Activated CD4-positive, alpha-beta T cell treated with anti-CD3 and anti-CD28 coated beads for 36 hours (primary cell): ENCODE measurements at regions of chr3 and their contacts with region 1.

Region 1: GRCh38 chr3:71423151-71423906 is 160.2 kb downstream of the FOXP1 start:
- DNase-seq: no peak
- ATAC-seq: no peak
- H3K4me3 Mint-ChIP-seq: no peak overlapping the region
- H3K27ac Mint-ChIP-seq: peak overlapping the region; percentile 92
- H3K4me1 Mint-ChIP-seq: peaks cover 94% of the 10 kb centered on the region
- H3K27me3 Mint-ChIP-seq: no peaks in the 10 kb centered on the region

Region 2: GRCh38 chr3:71160800-71161546 is 262.4 kb before region 1 on chr3:
- CTCF ChIA-PET with region 1: no interaction called
- POLR2A ChIA-PET with region 1: no interaction called
- intact Hi-C with region 1: no loop called
- DNase-seq: peak; percentile 22
- ATAC-seq: peak; percentile 64
- H3K4me3 Mint-ChIP-seq: no peak overlapping the region
- H3K27ac Mint-ChIP-seq: peak overlapping the region; percentile 77
- H3K4me1 Mint-ChIP-seq: peaks cover 71% of the 10 kb centered on the region
- H3K27me3 Mint-ChIP-seq: no peaks in the 10 kb centered on the region

Region 3: GRCh38 chr3:71247221-71247976 is 175.9 kb before region 1 on chr3:
- CTCF ChIA-PET with region 1: no interaction called
- POLR2A ChIA-PET with region 1: no interaction called
- intact Hi-C with region 1: no loop called
- DNase-seq: no peak
- ATAC-seq: peak; percentile 67
- H3K4me3 Mint-ChIP-seq: no peak overlapping the region
- H3K27ac Mint-ChIP-seq: no peak overlapping the region
- H3K4me1 Mint-ChIP-seq: peaks cover 74% of the 10 kb centered on the region
- H3K27me3 Mint-ChIP-seq: no peaks in the 10 kb centered on the region

Region 4: GRCh38 chr3:71380096-71380495 is 43.2 kb before region 1 on chr3:
- CTCF ChIA-PET with region 1: no interaction called
- POLR2A ChIA-PET with region 1: no interaction called
- intact Hi-C with region 1: loop called (anchors 5 kb)
- DNase-seq: no peak
- ATAC-seq: no peak
- H3K4me3 Mint-ChIP-seq: no peak overlapping the region
- H3K27ac Mint-ChIP-seq: peak overlapping the region; percentile 7
- H3K4me1 Mint-ChIP-seq: peaks cover 91% of the 10 kb centered on the region
- H3K27me3 Mint-ChIP-seq: no peaks in the 10 kb centered on the region

Region 5: GRCh38 chr3:71397046-71397445 is 26.3 kb before region 1 on chr3:
- CTCF ChIA-PET with region 1: interaction called, 10 read pairs
- POLR2A ChIA-PET with region 1: interaction called, 3 read pairs
- intact Hi-C with region 1: loop called (anchors 1 kb)
- DNase-seq: peak; percentile 36
- ATAC-seq: no peak
- H3K4me3 Mint-ChIP-seq: no peak overlapping the region
- H3K27ac Mint-ChIP-seq: no peak overlapping the region
- H3K4me1 Mint-ChIP-seq: peaks cover 83% of the 10 kb centered on the region
- H3K27me3 Mint-ChIP-seq: peaks cover 2% of the 10 kb centered on the region

Region 6: DNA sequence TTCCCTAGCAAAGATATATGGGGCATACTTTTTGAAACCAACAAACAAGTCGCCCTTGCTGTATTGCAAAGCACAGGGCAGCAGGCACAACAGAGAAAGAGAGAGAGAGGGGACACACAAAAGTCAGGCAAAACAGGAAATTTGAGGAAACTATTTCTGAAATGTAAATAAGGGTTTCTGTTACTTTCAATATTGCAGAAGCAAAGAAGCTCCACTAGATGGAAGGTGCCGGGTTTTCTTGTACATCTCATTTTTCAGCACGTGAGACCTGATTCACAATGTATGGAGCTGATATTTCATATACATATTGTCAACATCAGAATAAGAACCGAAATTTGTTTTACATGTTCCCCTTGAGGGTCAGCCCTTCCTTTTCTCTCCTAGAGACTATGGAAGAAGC is 32.8 kb after region 1 on chr3:
- CTCF ChIA-PET with region 1: interaction called, 3 read pairs
- POLR2A ChIA-PET with region 1: interaction called, 3 read pairs
- intact Hi-C with region 1: loop called in 1 of 2 experiments (anchors 2 kb)
- DNase-seq: no peak
- ATAC-seq: peak; percentile 10
- H3K4me3 Mint-ChIP-seq: peak overlapping the region; percentile 62
- H3K27ac Mint-ChIP-seq: peak overlapping the region; percentile 92
- H3K4me1 Mint-ChIP-seq: peaks cover 91% of the 10 kb centered on the region
- H3K27me3 Mint-ChIP-seq: no peaks in the 10 kb centered on the region

Region 7: DNA sequence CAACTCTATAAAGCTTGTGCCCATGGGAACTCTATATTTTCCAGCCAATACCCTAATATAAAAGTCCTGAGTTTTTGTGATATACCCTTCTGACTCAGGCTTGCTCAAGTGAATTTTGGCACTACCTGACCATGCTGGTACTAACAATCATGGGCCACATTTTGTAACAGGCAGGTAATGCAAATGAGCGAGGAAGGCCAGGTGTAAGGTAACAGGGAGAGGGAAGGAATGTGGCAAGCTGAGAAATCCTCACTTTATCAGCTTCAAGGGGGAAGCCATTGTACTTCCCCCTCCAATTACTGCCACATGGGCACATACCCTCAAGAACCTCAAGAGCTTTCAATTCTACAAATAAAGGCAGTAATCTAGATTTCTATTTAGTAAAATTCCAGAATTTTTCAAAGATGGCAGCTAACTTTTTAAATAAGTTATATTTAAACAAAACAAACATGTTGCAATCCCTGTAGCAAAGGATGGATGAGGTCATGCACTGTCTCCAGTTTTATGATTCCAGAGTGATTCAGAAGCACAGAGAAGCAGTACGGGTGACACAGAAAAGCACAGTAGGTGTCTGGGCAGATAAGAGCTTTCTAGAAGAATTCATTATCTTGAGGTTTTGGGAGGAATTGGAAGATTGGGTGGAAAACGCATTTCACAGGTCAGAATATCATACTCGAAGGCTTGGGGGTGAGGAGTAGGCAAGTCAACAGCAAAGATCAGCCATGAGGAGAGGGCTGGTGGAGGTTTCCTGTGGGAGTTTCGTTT is 72.6 kb after region 1 on chr3:
- CTCF ChIA-PET with region 1: no interaction called
- POLR2A ChIA-PET with region 1: no interaction called
- intact Hi-C with region 1: loop called in 1 of 2 experiments (anchors 2 kb)
- DNase-seq: peak; percentile 47
- ATAC-seq: peak; percentile 71
- H3K4me3 Mint-ChIP-seq: peak overlapping the region; percentile 56
- H3K27ac Mint-ChIP-seq: peak overlapping the region; percentile 89
- H3K4me1 Mint-ChIP-seq: peaks cover 75% of the 10 kb centered on the region
- H3K27me3 Mint-ChIP-seq: no peaks in the 10 kb centered on the region